RWPE1 (cell line): ENCODE measurements at regions of chr6 and their contacts with region 1.

Region 1: GRCh38 chr6:30914076-30914853 is at the start of gene VARS2:
- DNase-seq: peak; percentile 96
- H3K27ac ChIP-seq: peak within 1 kb of the TSS; percentile 87
- CTCF ChIP-seq: peak; percentile 76

Region 2: GRCh38 chr6:30828027-30828960 is 86.0 kb before region 1 on chr6:
- CTCF ChIA-PET with region 1: interaction called, 23 read pairs
- POLR2A ChIA-PET with region 1: interaction called, 3 read pairs
- DNase-seq: peak; percentile 89
- H3K27ac ChIP-seq: peak overlapping the region; percentile 96
- CTCF ChIP-seq: peak; percentile 90

Region 3: GRCh38 chr6:31060145-31060544 is 145.9 kb after region 1 on chr6:
- CTCF ChIA-PET with region 1: interaction called, 11 read pairs
- POLR2A ChIA-PET with region 1: no interaction called
- DNase-seq: no peak
- H3K27ac ChIP-seq: peak overlapping the region; percentile 96; the same call in 1 of the 2 replicates
- CTCF ChIP-seq: no peak

Region 4: GRCh38 chr6:31079656-31080261 is 165.5 kb after region 1 on chr6:
- CTCF ChIA-PET with region 1: interaction called, 29 read pairs
- POLR2A ChIA-PET with region 1: interaction called, 3 read pairs
- DNase-seq: peak; percentile 58
- H3K27ac ChIP-seq: peak overlapping the region; percentile 33; the same call in 1 of the 2 replicates
- CTCF ChIP-seq: peak; percentile 94